ENCODE measurements at regions of chr2 and their contacts with region 1.

Region 1: GRCh38 chr2:20097879-20098714 is 46.7 kb upstream of the LAPTM4A start:
- DNase-seq: peak; percentile 49
- ATAC-seq: peak; percentile 96
- H3K4me3 ChIP-seq: no peak overlapping the region
- H3K27ac ChIP-seq: no peak overlapping the region
- H3K4me1 ChIP-seq: no peaks in the 10 kb centered on the region; the same call in 1 of the 2 replicates
- H3K27me3 ChIP-seq: no peaks in the 10 kb centered on the region
- CTCF ChIP-seq: peak; percentile 92 to 99 (median 97); a peak in 5 of 6 replicates
- EP300 ChIP-seq: no peak
- POLR2A ChIP-seq: no peak
- RAD21 ChIP-seq: peak; percentile 99

Region 2: DNA sequence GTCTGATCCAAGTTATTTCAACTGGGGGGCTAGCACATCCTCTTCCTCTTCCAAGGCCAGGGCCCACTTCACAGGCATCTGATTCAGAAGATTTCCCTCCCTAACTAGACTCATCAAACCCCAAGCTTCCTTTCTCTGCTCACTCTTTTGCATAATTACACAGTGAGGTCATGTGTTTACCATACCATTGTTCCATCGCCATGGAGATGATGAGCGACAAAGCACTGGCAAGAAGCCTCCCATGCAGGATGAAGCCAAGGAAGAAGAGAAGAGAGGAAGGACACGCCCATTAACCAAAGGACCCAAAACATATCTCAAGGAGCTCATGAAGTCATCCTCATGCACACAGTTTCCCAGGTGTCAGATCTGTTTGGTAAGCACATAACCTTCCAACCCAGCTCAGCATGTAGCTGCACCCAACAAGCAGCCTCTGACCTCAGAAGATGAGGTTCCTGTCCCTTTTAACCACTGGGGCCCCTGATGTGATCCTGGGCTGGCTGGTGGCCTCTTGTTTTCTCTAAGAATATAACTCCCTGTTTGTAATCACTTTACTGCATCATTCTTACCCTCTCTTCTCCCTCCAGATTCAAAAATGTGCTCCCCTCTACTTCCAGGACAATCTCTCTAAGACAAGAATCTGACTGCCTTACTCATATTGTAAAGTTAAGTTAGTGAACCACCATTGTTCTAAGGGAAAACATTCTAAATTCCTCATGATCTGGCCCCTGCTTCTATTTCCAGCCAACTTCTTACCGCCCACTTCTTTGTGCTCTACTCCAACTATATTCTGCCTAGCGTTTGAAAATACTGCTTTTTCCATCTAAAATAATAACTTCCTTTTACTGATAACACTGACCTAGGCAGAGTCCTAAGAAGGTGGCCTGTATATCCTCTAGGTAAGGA is 386.4 kb before region 1 on chr2:
- CTCF ChIA-PET with region 1: no interaction called
- POLR2A ChIA-PET with region 1: no interaction called
- RAD21 ChIA-PET with region 1: no interaction called
- SMC1A ChIA-PET with region 1: no interaction called
- in situ Hi-C with region 1: no loop called
- intact Hi-C with region 1: no loop called
- DNase-seq: no peak
- ATAC-seq: no peak
- H3K4me3 ChIP-seq: no peak overlapping the region
- H3K27ac ChIP-seq: no peak overlapping the region
- H3K4me1 ChIP-seq: no peaks in the 10 kb centered on the region
- H3K27me3 ChIP-seq: no peaks in the 10 kb centered on the region
- CTCF ChIP-seq: no peak
- EP300 ChIP-seq: no peak
- POLR2A ChIP-seq: no peak
- RAD21 ChIP-seq: no peak

Region 3: GRCh38 chr2:19868705-19869580 is 229.2 kb before region 1 on chr2:
- CTCF ChIA-PET with region 1: interaction called, 4 read pairs
- POLR2A ChIA-PET with region 1: no interaction called
- RAD21 ChIA-PET with region 1: no interaction called
- SMC1A ChIA-PET with region 1: no interaction called
- in situ Hi-C with region 1: no loop called
- intact Hi-C with region 1: loop called (anchors 5 kb)
- DNase-seq: no peak
- ATAC-seq: peak; percentile 31
- H3K4me3 ChIP-seq: peak overlapping the region; percentile 60
- H3K27ac ChIP-seq: no peak overlapping the region
- H3K4me1 ChIP-seq: peaks cover 9% of the 10 kb centered on the region
- H3K27me3 ChIP-seq: no peaks in the 10 kb centered on the region
- CTCF ChIP-seq: no peak
- EP300 ChIP-seq: no peak
- POLR2A ChIP-seq: peak; percentile 55
- RAD21 ChIP-seq: no peak

Region 4: DNA sequence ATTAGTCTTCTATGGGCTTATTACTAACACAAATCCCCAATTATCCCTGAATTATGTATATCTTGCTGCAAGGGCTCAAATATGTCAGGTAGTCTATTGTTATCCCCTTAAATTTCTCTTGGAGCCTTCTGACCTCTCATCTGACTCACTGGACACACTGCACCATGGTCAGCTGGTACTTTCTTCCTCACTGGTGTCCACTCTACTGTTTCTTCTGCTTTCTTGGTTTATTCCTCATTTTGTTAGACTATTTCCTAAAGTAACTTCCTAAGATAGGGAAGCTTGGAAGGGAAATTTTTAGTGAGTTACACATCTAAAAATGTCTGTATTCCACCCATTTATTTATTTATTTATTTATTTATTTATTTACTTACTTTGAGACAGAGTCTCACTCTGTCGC is 134.7 kb before region 1 on chr2:
- CTCF ChIA-PET with region 1: interaction called, 5 read pairs
- POLR2A ChIA-PET with region 1: no interaction called
- RAD21 ChIA-PET with region 1: no interaction called
- SMC1A ChIA-PET with region 1: interaction called, 3 read pairs
- in situ Hi-C with region 1: loop called (anchors 5 kb)
- intact Hi-C with region 1: no loop called
- DNase-seq: no peak
- ATAC-seq: no peak
- H3K4me3 ChIP-seq: no peak overlapping the region
- H3K27ac ChIP-seq: no peak overlapping the region
- H3K4me1 ChIP-seq: no peaks in the 10 kb centered on the region
- H3K27me3 ChIP-seq: no peaks in the 10 kb centered on the region
- CTCF ChIP-seq: no peak
- EP300 ChIP-seq: no peak
- POLR2A ChIP-seq: no peak
- RAD21 ChIP-seq: no peak

Region 5: GRCh38 chr2:20113980-20114954 is 16.2 kb after region 1 on chr2:
- CTCF ChIA-PET with region 1: no interaction called
- POLR2A ChIA-PET with region 1: no interaction called
- RAD21 ChIA-PET with region 1: no interaction called
- SMC1A ChIA-PET with region 1: no interaction called
- in situ Hi-C with region 1: no loop called
- intact Hi-C with region 1: no loop called
- DNase-seq: no peak
- ATAC-seq: no peak
- H3K4me3 ChIP-seq: no peak overlapping the region
- H3K27ac ChIP-seq: no peak overlapping the region
- H3K4me1 ChIP-seq: no peaks in the 10 kb centered on the region
- H3K27me3 ChIP-seq: no peaks in the 10 kb centered on the region
- CTCF ChIP-seq: no peak
- EP300 ChIP-seq: no peak
- POLR2A ChIP-seq: no peak
- RAD21 ChIP-seq: no peak